Heart left ventricle (tissue), 16 donors: ENCODE measurements at regions of chr21 and their contacts with region 1.

Region 1: GRCh38 chr21:30689822-30690221 is 28.8 kb downstream of the KRTAP21-3 start:
- DNase-seq: no peak
- ATAC-seq: no peak
- H3K4me3 ChIP-seq: no peak overlapping the region
- H3K27ac ChIP-seq: no peak overlapping the region
- H3K4me1 ChIP-seq: no peaks in the 10 kb centered on the region
- H3K27me3 ChIP-seq: no peaks in the 10 kb centered on the region
- CTCF ChIP-seq: no peak
- POLR2A ChIP-seq: no peak

Region 2: GRCh38 chr21:30552782-30553181 is 137.0 kb before region 1 on chr21:
- intact Hi-C with region 1: loop called in 1 of 10 experiments (anchors 5 kb)
- DNase-seq: no peak
- ATAC-seq: peak in 2 of 4 donors; percentile 65 to 69
- H3K4me3 ChIP-seq: no peak overlapping the region
- H3K27ac ChIP-seq: no peak overlapping the region
- H3K4me1 ChIP-seq: no peaks in the 10 kb centered on the region
- H3K27me3 ChIP-seq: no peaks in the 10 kb centered on the region
- CTCF ChIP-seq: no peak
- POLR2A ChIP-seq: no peak

Region 3: GRCh38 chr21:30620522-30620921 is 69.3 kb before region 1 on chr21 and contains the start of gene KRTAP20-4:
- intact Hi-C with region 1: no loop called
- DNase-seq: no peak
- ATAC-seq: no peak
- H3K4me3 ChIP-seq: no peak within 1 kb of the TSS
- H3K27ac ChIP-seq: no peak within 1 kb of the TSS
- H3K4me1 ChIP-seq: no peaks in the 10 kb centered on the region
- H3K27me3 ChIP-seq: no peaks in the 10 kb centered on the region
- CTCF ChIP-seq: no peak
- POLR2A ChIP-seq: no peak
- total RNA-seq, gene KRTAP20-4: not detected